ENCODE measurements at regions of chr12 and their contacts with region 1.

Region 1: GRCh38 chr12:112382232-112382796 is at the start of gene HECTD4:
- DNase-seq: peak; percentile 98
- H3K4me3 ChIP-seq: peak within 1 kb of the TSS; percentile 89
- H3K27ac ChIP-seq: peak within 1 kb of the TSS; percentile 26
- H3K4me1 ChIP-seq: peaks cover 15% of the 10 kb centered on the region; the same call in 1 of the 2 replicates
- H3K27me3 ChIP-seq: no peaks in the 10 kb centered on the region
- total RNA-seq, gene HECTD4: 7.5 and 13.9 TPM in 2 replicates

Region 2: GRCh38 chr12:111942557-111942956 is 439.8 kb before region 1 on chr12:
- in situ Hi-C with region 1: loop called (anchors 25 kb)
- DNase-seq: peak; percentile 44
- H3K4me3 ChIP-seq: no peak overlapping the region
- H3K27ac ChIP-seq: no peak overlapping the region
- H3K4me1 ChIP-seq: peaks cover 6% of the 10 kb centered on the region; the same call in 1 of the 2 replicates
- H3K27me3 ChIP-seq: no peaks in the 10 kb centered on the region

Region 3: GRCh38 chr12:112219195-112219594 is 163.1 kb before region 1 on chr12:
- in situ Hi-C with region 1: loop called (anchors 10 kb)
- DNase-seq: peak; percentile 30
- H3K4me3 ChIP-seq: no peak overlapping the region
- H3K27ac ChIP-seq: no peak overlapping the region
- H3K4me1 ChIP-seq: peaks cover 12% of the 10 kb centered on the region
- H3K27me3 ChIP-seq: no peaks in the 10 kb centered on the region

Region 4: GRCh38 chr12:112555621-112556233 is 173.4 kb after region 1 on chr12:
- in situ Hi-C with region 1: no loop called
- DNase-seq: no peak
- H3K4me3 ChIP-seq: no peak overlapping the region
- H3K27ac ChIP-seq: no peak overlapping the region
- H3K4me1 ChIP-seq: no peaks in the 10 kb centered on the region
- H3K27me3 ChIP-seq: peaks cover 11% of the 10 kb centered on the region; the same call in 1 of the 2 replicates

Measured in GM23248 (cell line).